GM10248 (cell line): ENCODE measurements at regions of chr5 and their contacts with region 1.

Region 1: GRCh38 chr5:172764849-172765765 is 5.9 kb downstream of the DUSP1 start:
- DNase-seq: peak; percentile 93
- CTCF ChIP-seq: no peak

Region 2: GRCh38 chr5:172751766-172752510 is 13.2 kb before region 1 on chr5:
- CTCF ChIA-PET with region 1: interaction called, 10 read pairs
- POLR2A ChIA-PET with region 1: interaction called, 5 read pairs
- DNase-seq: no peak
- CTCF ChIP-seq: no peak

Region 3: GRCh38 chr5:173331956-173332479 is 566.9 kb after region 1 on chr5:
- CTCF ChIA-PET with region 1: no interaction called
- POLR2A ChIA-PET with region 1: no interaction called
- DNase-seq: peak; percentile 90
- CTCF ChIP-seq: peak; percentile 86